ENCODE measurements at regions of chr2 and their contacts with region 1.

Region 1: GRCh38 chr2:204486805-204487204 is 58.5 kb upstream of the PARD3B start:
- DNase-seq: no peak
- ATAC-seq: no peak
- H3K4me3 ChIP-seq: no peak overlapping the region
- H3K27ac ChIP-seq: no peak overlapping the region
- H3K4me1 ChIP-seq: peaks cover 0 to 3% (median 0%) of the 10 kb centered on the region in 12 donors
- H3K27me3 ChIP-seq: no peaks in the 10 kb centered on the region
- CTCF ChIP-seq: no peak
- POLR2A ChIP-seq: no peak

Region 2: GRCh38 chr2:204515416-204515815 is 28.6 kb after region 1 on chr2:
- intact Hi-C with region 1: loop called in 1 of 10 experiments (anchors 5 kb)
- DNase-seq: no peak
- ATAC-seq: no peak
- H3K4me3 ChIP-seq: no peak overlapping the region
- H3K27ac ChIP-seq: no peak overlapping the region
- H3K4me1 ChIP-seq: no peaks in the 10 kb centered on the region
- H3K27me3 ChIP-seq: no peaks in the 10 kb centered on the region
- CTCF ChIP-seq: no peak
- POLR2A ChIP-seq: no peak

Measured in heart left ventricle (tissue), 16 donors.